CD14-positive monocyte (primary cell): ENCODE measurements at regions of chr3 and their contacts with region 1.

Region 1: DNA sequence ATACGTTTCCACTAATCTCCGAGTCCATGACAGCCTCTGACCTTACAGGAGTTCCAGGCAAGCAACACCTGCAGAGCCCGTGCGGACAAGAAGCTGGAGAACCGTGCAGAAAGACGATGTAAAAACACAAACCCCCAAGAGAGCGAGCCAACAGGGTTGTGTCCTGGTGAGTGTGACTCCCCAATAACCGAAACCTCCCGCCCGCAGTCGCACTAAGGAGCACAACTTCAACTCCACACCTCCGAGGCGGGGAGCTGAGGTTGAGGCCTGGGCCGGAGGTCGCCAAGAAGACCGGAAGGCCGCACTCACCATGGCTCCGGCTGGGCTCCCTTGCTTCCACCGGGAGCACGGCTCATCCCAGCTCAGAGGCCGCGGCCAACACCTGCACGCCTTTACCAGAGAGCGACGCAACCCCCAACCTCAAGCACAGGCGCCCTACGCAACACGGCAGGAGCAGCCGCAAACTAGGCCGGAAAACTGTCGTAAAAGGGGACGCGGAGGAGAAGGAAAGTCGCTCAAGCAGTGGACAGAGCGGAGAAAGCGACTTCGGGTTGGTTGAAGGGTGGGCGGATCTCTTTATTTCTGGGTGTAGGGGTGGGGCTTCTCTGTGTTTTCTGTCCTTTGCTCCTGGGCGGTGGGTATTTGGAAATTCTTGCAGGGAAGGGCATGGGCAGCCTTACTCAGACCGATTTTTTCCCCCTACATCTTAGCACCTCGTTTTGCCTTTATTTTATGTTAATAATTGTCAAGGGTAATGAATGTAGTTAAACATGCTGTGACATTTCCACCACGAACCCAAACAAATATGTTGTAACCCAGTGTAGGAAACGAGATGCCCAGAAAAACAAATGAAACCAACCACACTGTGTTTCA is at the start of gene DNAJC19:
- DNase-seq: peak; percentile 86 to 87 (median 87)
- H3K4me3 ChIP-seq: peak within 1 kb of the TSS; percentile 76 to 96 (median 90)
- H3K4me3 Mint-ChIP-seq: peak within 1 kb of the TSS; percentile 87 to 99
- H3K27ac ChIP-seq: peak within 1 kb of the TSS; percentile 49 to 82
- H3K27ac Mint-ChIP-seq: peak within 1 kb of the TSS; percentile 83 to 95 (median 87)
- H3K4me1 ChIP-seq: peaks cover 13 to 19% of the 10 kb centered on the region in 2 donors
- H3K4me1 Mint-ChIP-seq: peaks cover 16% of the 10 kb centered on the region
- H3K27me3 ChIP-seq: no peaks in the 10 kb centered on the region
- H3K27me3 Mint-ChIP-seq: peaks cover 0 to 6% (median 0%) of the 10 kb centered on the region in 3 donors
- CTCF ChIP-seq: no peak
- polyA plus RNA-seq, gene DNAJC19: 10.7 to 44.7 (median 44.0) TPM

Region 2: GRCh38 chr3:180912304-180913296 is 76.9 kb before region 1 on chr3 and contains the start of gene FXR1:
- intact Hi-C with region 1: loop called (anchors 5 kb)
- DNase-seq: peak; percentile 71 to 81 (median 76)
- H3K4me3 ChIP-seq: peak within 1 kb of the TSS; percentile 94 to 98 (median 96)
- H3K4me3 Mint-ChIP-seq: peak within 1 kb of the TSS; percentile 90 to 96
- H3K27ac ChIP-seq: peak within 1 kb of the TSS; percentile 94 to 96
- H3K27ac Mint-ChIP-seq: peak within 1 kb of the TSS; percentile 95 to 99 (median 96)
- H3K4me1 ChIP-seq: peaks cover 18 to 28% of the 10 kb centered on the region in 2 donors
- H3K4me1 Mint-ChIP-seq: peaks cover 24% of the 10 kb centered on the region
- H3K27me3 ChIP-seq: no peaks in the 10 kb centered on the region
- H3K27me3 Mint-ChIP-seq: peaks cover 0 to 2% (median 1%) of the 10 kb centered on the region in 3 donors
- CTCF ChIP-seq: peak; percentile 69
- polyA plus RNA-seq, gene FXR1: 22.4 to 58.6 (median 32.3) TPM

Region 3: GRCh38 chr3:180918542-180918941 is 71.0 kb before region 1 on chr3:
- intact Hi-C with region 1: loop called (anchors 5 kb)
- DNase-seq: no peak
- H3K4me3 ChIP-seq: no peak overlapping the region
- H3K4me3 Mint-ChIP-seq: no peak overlapping the region
- H3K27ac ChIP-seq: peak overlapping the region in 1 of 2 donors; percentile 8
- H3K27ac Mint-ChIP-seq: peak overlapping the region in 2 of 7 donors; percentile 25 to 46
- H3K4me1 ChIP-seq: peaks cover 7 to 14% of the 10 kb centered on the region in 2 donors
- H3K4me1 Mint-ChIP-seq: peaks cover 21% of the 10 kb centered on the region
- H3K27me3 ChIP-seq: no peaks in the 10 kb centered on the region
- H3K27me3 Mint-ChIP-seq: no peaks in the 10 kb centered on the region
- CTCF ChIP-seq: no peak